Natural killer cell (primary cell): ENCODE measurements at regions of chr5 and their contacts with region 1.

Region 1: DNA sequence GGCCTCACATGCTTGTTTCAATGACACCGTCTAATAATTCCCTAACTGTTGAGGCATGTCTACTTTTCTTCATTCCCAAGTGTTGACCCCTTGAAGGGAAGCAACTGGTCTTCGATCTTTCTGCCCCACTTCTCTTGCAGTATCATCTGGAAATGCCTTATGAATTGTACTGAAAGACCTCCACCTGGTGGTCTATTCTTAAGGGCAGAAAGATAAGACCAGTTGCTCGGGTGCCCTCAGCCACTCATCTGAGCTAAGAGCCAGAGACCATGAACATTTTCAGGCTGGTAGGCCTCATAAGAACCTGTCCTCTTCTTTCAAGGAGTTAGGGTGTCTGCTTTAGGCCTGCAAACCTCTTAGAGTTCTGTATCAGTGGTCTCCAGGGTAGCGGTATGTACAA is 542.5 kb downstream of the CTNND2 start:
- DNase-seq: peak in 1 of 2 donors; percentile 2
- ATAC-seq: no peak
- H3K4me3 ChIP-seq: no peak overlapping the region
- H3K4me3 Mint-ChIP-seq: no peak overlapping the region
- H3K27ac ChIP-seq: no peak overlapping the region
- H3K27ac Mint-ChIP-seq: no peak overlapping the region
- H3K4me1 ChIP-seq: no peaks in the 10 kb centered on the region
- H3K4me1 Mint-ChIP-seq: no peaks in the 10 kb centered on the region
- H3K27me3 ChIP-seq: no peaks in the 10 kb centered on the region
- H3K27me3 Mint-ChIP-seq: peaks cover 4 to 18% of the 10 kb centered on the region in 2 donors
- CTCF ChIP-seq: no peak

Region 2: DNA sequence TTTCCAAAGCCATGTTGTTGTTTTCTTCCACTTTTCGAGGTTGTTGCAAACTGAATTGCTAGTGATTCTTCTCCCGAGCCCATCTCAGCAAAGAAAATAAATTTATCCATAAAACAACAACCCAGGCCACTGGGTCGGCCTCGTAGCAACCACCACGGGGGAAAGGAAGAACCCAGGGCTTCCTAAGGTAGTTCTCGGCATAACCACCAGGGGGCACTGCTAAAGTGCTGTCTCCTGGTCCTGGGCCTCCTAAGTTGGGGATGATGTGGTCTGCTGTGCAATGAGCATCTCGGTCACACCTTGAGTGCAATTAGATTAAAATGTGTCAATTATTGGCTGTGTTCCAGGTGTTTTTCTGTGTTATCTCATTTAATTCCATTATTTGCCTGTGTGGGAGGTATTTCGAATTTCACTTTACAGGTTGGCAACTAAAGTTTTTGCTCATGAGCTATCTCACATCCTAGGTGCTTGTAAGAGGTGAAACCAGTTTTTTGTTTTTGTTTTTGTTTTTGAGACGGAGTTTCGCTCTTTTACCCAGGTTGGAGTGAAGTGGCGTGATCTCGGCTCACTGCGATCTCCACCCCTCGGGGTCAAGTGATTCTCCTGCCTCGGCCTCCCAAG is 497.9 kb before region 1 on chr5:
- intact Hi-C with region 1: loop called (anchors 10 kb)
- DNase-seq: peak; percentile 45 to 65
- ATAC-seq: peak; percentile 72 to 91 (median 77)
- H3K4me3 ChIP-seq: no peak overlapping the region
- H3K4me3 Mint-ChIP-seq: no peak overlapping the region
- H3K27ac ChIP-seq: no peak overlapping the region
- H3K27ac Mint-ChIP-seq: no peak overlapping the region
- H3K4me1 ChIP-seq: no peaks in the 10 kb centered on the region
- H3K4me1 Mint-ChIP-seq: peaks cover 0 to 4% of the 10 kb centered on the region in 2 donors
- H3K27me3 ChIP-seq: no peaks in the 10 kb centered on the region
- H3K27me3 Mint-ChIP-seq: peaks cover 3 to 7% of the 10 kb centered on the region in 2 donors
- CTCF ChIP-seq: peak; percentile 84

Region 3: GRCh38 chr5:11251262-11251661 is 110.5 kb before region 1 on chr5:
- intact Hi-C with region 1: no loop called
- DNase-seq: no peak
- ATAC-seq: no peak
- H3K4me3 ChIP-seq: no peak overlapping the region
- H3K4me3 Mint-ChIP-seq: no peak overlapping the region
- H3K27ac ChIP-seq: no peak overlapping the region
- H3K27ac Mint-ChIP-seq: no peak overlapping the region
- H3K4me1 ChIP-seq: no peaks in the 10 kb centered on the region
- H3K4me1 Mint-ChIP-seq: peaks cover 9 to 20% of the 10 kb centered on the region in 2 donors
- H3K27me3 ChIP-seq: no peaks in the 10 kb centered on the region
- H3K27me3 Mint-ChIP-seq: peaks cover 0 to 4% of the 10 kb centered on the region in 2 donors
- CTCF ChIP-seq: no peak